HCT116 (cell line): ENCODE measurements at regions of chr3 and their contacts with region 1.

Region 1: DNA sequence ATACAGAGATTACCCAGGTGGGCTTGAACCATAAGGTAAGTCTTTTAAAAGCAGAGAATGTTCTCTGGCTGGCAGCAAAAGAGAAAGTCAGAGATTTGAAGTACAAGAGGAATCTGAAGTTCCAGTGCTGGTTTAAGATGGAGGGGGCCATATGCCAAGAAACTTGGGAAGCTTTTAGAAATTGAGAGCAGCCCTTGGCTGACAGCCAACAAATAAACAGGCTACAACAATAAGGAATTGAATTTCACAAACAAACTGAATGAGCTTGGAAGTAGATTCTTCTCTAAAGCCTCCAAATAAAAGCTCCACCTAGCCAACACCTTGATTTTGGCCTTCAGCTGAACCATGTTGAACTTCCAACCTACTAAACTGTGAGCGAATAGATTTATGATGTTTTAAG is 85.7 kb downstream of the TRIM42 start:
- DNase-seq: no peak
- ATAC-seq: no peak
- H3K4me3 ChIP-seq: no peak overlapping the region
- H3K27ac ChIP-seq: no peak overlapping the region
- H3K4me1 ChIP-seq: no peaks in the 10 kb centered on the region
- H3K27me3 ChIP-seq: peaks cover 39% of the 10 kb centered on the region; the same call in 1 of the 2 replicates
- CTCF ChIP-seq: no peak
- POLR2A ChIP-seq: no peak
- RAD21 ChIP-seq: no peak

Region 2: DNA sequence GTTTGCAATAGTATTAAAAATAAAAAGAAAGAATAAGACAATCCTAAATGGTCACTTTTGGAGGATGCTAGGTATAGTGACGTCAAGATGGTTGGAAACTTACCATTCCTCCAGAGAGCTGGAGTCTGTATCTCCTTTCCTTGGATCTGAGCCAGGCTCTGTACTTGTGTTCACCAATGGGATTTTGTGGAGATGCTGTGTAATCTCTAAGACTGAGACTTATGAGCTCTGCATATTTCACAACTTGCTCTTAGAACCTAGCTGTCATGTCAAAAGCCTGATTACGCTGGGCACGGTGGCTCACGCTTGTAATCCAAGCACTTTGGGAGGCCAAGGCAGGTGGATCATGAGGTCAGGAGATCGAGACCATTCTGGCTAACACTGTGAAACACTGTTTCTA is 955.3 kb before region 1 on chr3:
- CTCF ChIA-PET with region 1: no interaction called
- POLR2A ChIA-PET with region 1: no interaction called
- RAD21 ChIA-PET with region 1: no interaction called
- intact Hi-C with region 1: loop called (anchors 5 kb)
- DNase-seq: no peak
- ATAC-seq: no peak
- H3K4me3 ChIP-seq: no peak overlapping the region
- H3K27ac ChIP-seq: no peak overlapping the region
- H3K4me1 ChIP-seq: no peaks in the 10 kb centered on the region
- H3K27me3 ChIP-seq: peaks cover 47% of the 10 kb centered on the region
- CTCF ChIP-seq: no peak
- POLR2A ChIP-seq: no peak
- RAD21 ChIP-seq: no peak